Activated CD8-positive, alpha-beta T cell treated with anti-CD3 and anti-CD28 coated beads for 36 hours (primary cell): ENCODE measurements at regions of chr1 and their contacts with region 1.

Region 1: DNA sequence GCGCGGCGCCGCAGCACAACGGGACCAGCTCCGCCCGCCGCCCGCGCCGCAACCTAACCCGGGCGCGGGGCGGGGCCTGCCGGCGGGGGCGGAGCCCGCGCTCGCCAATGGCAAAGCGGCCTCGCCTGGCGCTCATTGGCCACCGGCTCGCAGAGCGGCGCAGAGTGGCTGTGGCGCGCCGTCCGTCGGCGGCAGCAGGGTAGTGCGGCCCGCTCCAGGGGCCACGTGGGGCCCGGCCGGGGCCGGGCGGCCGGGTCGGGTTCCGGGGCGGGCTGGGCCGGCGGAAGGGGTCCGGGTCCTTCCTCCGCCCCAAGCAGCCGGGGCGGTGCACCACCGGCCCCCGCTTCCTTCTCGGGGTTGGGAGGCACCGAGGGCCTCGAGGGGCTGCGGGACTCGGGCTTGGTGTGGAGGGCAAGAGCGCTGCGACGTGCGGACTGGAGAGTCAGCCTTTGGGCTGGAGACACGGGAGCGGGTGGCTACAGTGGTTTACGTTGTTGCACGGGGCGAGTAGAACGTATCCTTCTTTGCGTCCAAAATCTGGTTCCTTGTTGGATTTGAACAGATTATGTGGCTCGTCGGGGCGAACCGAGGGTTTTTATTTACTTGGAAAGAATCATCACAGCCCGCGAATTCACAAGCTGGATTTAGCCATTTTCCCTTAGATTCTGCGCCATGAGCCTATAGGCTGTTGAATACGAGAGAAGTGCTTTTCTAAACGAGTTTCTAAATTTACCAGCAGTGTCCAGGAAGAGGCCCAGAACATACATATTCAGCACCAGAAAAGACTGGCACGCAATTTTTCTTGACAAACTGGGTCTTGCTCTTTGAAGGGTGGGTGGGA is at the start of gene SRM:
- DNase-seq: peak; percentile 90
- ATAC-seq: peak; percentile 95
- H3K4me3 Mint-ChIP-seq: peak within 1 kb of the TSS; percentile 96
- H3K27ac Mint-ChIP-seq: peak within 1 kb of the TSS; percentile 98
- H3K4me1 Mint-ChIP-seq: peaks cover 41% of the 10 kb centered on the region
- H3K27me3 Mint-ChIP-seq: no peaks in the 10 kb centered on the region
- CTCF ChIP-seq: peak; percentile 42
- total RNA-seq, gene SRM: 240 TPM

Region 2: GRCh38 chr1:10796019-10796944 is 263.9 kb before region 1 on chr1 and contains the start of gene CASZ1:
- CTCF ChIA-PET with region 1: no interaction called
- POLR2A ChIA-PET with region 1: no interaction called
- intact Hi-C with region 1: no loop called
- DNase-seq: no peak
- ATAC-seq: no peak
- H3K4me3 Mint-ChIP-seq: no peak within 1 kb of the TSS
- H3K27ac Mint-ChIP-seq: no peak within 1 kb of the TSS
- H3K4me1 Mint-ChIP-seq: peaks cover 12% of the 10 kb centered on the region
- H3K27me3 Mint-ChIP-seq: peaks cover 66% of the 10 kb centered on the region
- CTCF ChIP-seq: no peak
- total RNA-seq, gene CASZ1: 2.9 to 4.1 TPM

Region 3: DNA sequence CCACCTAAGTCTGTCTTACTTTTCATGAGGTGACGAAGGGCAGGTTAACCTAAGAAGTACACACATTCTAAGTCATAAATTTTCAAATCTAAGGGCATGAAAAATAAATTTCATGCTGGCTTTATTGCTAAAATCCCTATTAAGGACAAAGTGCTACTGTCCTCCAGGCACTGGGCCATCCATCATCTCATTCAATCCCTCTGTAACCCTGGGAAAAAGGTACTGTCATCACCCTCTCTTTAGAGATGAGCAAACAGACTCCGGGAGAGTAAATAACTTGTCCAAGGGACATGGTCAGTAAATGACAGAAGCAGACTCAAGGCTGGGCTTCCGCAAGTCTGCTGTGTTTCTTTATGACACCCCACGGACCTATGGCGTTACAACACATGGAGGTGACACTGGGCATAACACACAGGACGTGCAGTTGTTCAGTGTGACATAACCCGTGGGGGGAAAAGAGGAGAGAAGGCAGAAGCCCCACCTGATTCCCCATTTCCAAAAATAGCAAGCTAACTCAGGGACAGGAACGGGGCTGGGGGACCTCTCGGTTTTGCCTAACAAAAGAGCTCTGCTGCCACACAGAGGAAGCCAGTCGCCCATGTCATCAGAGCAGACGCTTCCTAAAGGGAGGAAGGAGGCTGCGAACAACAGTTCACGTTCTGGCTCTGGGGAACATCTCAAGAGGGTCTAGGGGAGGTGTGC is 12.2 kb after region 1 on chr1:
- CTCF ChIA-PET with region 1: interaction called, 4 read pairs
- POLR2A ChIA-PET with region 1: interaction called, 13 read pairs
- intact Hi-C with region 1: no loop called
- DNase-seq: no peak
- ATAC-seq: no peak
- H3K4me3 Mint-ChIP-seq: no peak overlapping the region
- H3K27ac Mint-ChIP-seq: peak overlapping the region; percentile 57
- H3K4me1 Mint-ChIP-seq: peaks cover 19% of the 10 kb centered on the region
- H3K27me3 Mint-ChIP-seq: no peaks in the 10 kb centered on the region
- CTCF ChIP-seq: no peak

Region 4: GRCh38 chr1:11109047-11109760 is 49.0 kb after region 1 on chr1:
- CTCF ChIA-PET with region 1: no interaction called
- POLR2A ChIA-PET with region 1: no interaction called
- intact Hi-C with region 1: no loop called
- DNase-seq: no peak
- ATAC-seq: no peak
- H3K4me3 Mint-ChIP-seq: no peak overlapping the region
- H3K27ac Mint-ChIP-seq: no peak overlapping the region
- H3K4me1 Mint-ChIP-seq: no peaks in the 10 kb centered on the region
- H3K27me3 Mint-ChIP-seq: no peaks in the 10 kb centered on the region
- CTCF ChIP-seq: no peak